ENCODE measurements at regions of chr7 and their contacts with region 1.

Region 1: GRCh38 chr7:99616359-99617191 is at the start of gene ZSCAN25:
- DNase-seq: peak; percentile 82 to 87
- H3K4me3 ChIP-seq: peak within 1 kb of the TSS; percentile 60 to 97 (median 96)
- H3K27ac ChIP-seq: peak within 1 kb of the TSS in 2 of 3 donors; percentile 77 to 79
- H3K4me1 ChIP-seq: peaks cover 9 to 11% of the 10 kb centered on the region in 2 donors
- H3K27me3 ChIP-seq: no peaks in the 10 kb centered on the region
- CTCF ChIP-seq: peak in 2 of 6 experiments; percentile 9 to 10
- POLR2A ChIP-seq: peak in 1 of 2 donors; percentile 59
- total RNA-seq, gene ZSCAN25: 17.5 to 32.4 (median 23.8) TPM

Region 2: GRCh38 chr7:98949336-98950044 is 667.1 kb before region 1 on chr7:
- intact Hi-C with region 1: no loop called
- DNase-seq: no peak
- H3K4me3 ChIP-seq: no peak overlapping the region
- H3K27ac ChIP-seq: no peak overlapping the region
- H3K4me1 ChIP-seq: no peaks in the 10 kb centered on the region
- H3K27me3 ChIP-seq: no peaks in the 10 kb centered on the region
- CTCF ChIP-seq: peak in 1 of 6 experiments; percentile 3
- POLR2A ChIP-seq: no peak

Region 3: GRCh38 chr7:99325545-99326407 is 290.8 kb before region 1 on chr7 and contains the start of gene ARPC1A:
- intact Hi-C with region 1: no loop called
- DNase-seq: peak; percentile 90 to 93
- H3K4me3 ChIP-seq: peak within 1 kb of the TSS; percentile 77 to 97 (median 85)
- H3K27ac ChIP-seq: peak within 1 kb of the TSS; percentile 68 to 85 (median 82)
- H3K4me1 ChIP-seq: peaks cover 19 to 29% of the 10 kb centered on the region in 2 donors
- H3K27me3 ChIP-seq: no peaks in the 10 kb centered on the region
- CTCF ChIP-seq: peak in 3 of 6 experiments; percentile 23 to 40 (median 29)
- POLR2A ChIP-seq: peak in 1 of 2 donors; percentile 80
- total RNA-seq, gene ARPC1A: 120 to 183 (median 147) TPM

Region 4: DNA sequence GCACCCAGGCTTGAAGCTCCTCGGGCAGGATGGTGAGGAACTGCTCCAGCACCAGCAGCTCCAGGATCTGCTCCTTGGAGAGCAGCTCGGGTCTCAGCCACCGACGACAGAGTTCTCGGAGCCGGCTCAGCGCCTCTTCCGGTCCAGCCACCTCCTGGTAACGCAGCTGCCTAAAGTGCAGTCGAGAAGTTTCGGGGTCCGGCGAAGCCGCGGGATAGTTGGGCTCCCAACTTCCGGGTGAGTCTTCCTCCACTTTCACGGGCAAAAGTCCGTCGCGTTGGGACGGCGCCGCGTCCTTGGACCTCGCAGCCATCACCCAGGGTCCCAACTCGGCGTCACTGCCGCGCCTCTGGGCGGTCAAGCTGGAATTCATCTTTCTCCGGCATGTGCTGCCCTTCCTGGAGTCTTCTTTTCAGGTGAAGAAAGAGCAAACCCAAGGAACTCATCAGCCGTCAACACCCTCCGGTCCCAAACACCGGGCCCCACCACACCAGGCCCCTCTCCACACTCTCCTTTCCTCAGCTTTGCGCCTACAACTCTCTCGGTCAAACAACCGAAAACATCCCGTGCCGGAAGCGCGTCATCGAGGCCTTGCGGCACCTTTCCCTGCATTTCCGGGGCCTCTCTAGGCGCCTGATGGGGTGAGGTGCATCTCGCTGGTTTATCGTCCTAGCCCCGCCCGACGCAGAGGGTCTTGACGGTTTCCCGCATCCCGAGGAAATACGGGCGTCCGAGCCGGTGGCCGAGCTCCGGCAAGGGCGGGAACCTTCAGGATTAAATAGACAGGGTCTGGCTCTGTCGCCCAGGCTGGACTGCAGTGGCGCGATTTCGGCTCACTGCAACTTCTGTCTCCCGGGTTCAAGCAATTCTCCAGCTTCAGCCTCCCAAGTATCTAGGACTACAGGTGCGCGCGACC is 116.6 kb before region 1 on chr7 and contains the start of gene ZNF394:
- intact Hi-C with region 1: no loop called
- DNase-seq: peak; percentile 90 to 93
- H3K4me3 ChIP-seq: peak within 1 kb of the TSS; percentile 44 to 92 (median 84)
- H3K27ac ChIP-seq: peak within 1 kb of the TSS; percentile 69 to 89 (median 89)
- H3K4me1 ChIP-seq: peaks cover 18 to 23% of the 10 kb centered on the region in 2 donors
- H3K27me3 ChIP-seq: no peaks in the 10 kb centered on the region
- CTCF ChIP-seq: peak in 1 of 6 experiments; percentile 8
- POLR2A ChIP-seq: peak in 1 of 2 donors; percentile 67
- total RNA-seq, gene ZNF394: 39.5 to 61.4 (median 46.1) TPM

Region 5: DNA sequence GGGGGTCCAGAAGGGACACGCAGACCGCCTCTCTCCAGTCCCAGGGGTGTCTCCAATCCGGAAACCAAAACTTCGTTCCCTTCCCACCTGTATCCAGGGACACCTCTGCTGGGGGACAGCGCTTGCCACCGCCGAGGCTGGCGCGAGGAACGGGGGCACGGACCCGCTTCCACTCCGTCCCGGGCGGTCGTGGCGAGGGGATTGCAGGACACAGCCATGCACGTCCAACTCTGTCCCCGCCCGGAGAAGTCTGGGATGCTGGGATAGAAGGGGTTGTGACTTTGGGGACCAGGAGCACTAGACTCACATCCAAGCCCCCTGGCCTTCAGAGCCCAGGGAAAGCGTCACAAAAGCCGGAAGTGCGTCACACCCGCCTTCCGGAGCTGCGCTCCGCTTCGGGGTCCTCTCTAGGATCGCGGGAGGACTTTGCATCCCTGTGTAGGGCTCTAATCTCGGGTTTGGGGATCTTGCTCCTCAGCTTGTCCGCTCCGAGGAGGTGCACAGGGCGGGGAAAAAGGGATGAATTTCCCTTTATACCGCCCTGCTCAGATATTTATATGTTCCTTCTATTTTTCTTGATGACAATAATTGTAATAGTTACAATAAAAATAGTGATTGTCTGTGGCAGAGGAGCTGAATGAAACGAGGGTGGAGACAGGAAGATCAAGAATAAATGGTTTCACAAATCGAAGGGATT is 64.7 kb before region 1 on chr7 and contains the start of gene FAM200A:
- intact Hi-C with region 1: loop called (anchors 10 kb)
- DNase-seq: peak; percentile 85 to 91
- H3K4me3 ChIP-seq: peak within 1 kb of the TSS; percentile 49 to 98 (median 85)
- H3K27ac ChIP-seq: peak within 1 kb of the TSS; percentile 46 to 84 (median 76)
- H3K4me1 ChIP-seq: peaks cover 10 to 18% of the 10 kb centered on the region in 2 donors
- H3K27me3 ChIP-seq: no peaks in the 10 kb centered on the region
- CTCF ChIP-seq: no peak
- POLR2A ChIP-seq: peak in 1 of 2 donors; percentile 72
- total RNA-seq, gene FAM200A: 4.4 to 10.6 (median 7.4) TPM

Region 6: GRCh38 chr7:99762680-99763327 is 146.2 kb after region 1 on chr7:
- intact Hi-C with region 1: no loop called
- DNase-seq: no peak
- H3K4me3 ChIP-seq: no peak overlapping the region
- H3K27ac ChIP-seq: no peak overlapping the region
- H3K4me1 ChIP-seq: no peaks in the 10 kb centered on the region
- H3K27me3 ChIP-seq: no peaks in the 10 kb centered on the region
- CTCF ChIP-seq: no peak
- POLR2A ChIP-seq: no peak